Activated B cell treated with CpG ODN at 0.5 μM for 24 hours (primary cell): ENCODE measurements at regions of chr11 and their contacts with region 1.

Region 1: DNA sequence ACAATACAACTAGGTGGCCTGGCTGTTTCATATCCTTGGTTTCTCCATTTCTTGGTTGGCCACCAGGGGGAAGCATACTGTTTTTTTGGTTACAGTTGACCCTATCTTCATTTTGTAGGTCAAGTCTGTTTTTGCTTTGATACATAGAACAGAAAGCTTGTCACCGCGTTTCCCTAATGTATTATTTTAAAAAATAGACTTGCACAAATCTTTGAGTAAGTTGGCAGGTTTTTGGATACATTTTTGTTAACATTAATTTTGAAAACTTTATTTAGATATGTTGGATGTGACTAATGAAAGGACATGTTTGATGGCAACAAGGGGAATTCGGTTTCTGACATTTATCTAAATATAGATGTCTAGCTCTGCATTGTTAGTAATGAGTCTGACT is 3.0 kb downstream of the NCR3LG1 start:
- DNase-seq: no peak
- ATAC-seq: no peak
- H3K4me3 Mint-ChIP-seq: peak overlapping the region; percentile 87
- H3K27ac Mint-ChIP-seq: no peak overlapping the region
- H3K4me1 Mint-ChIP-seq: peaks cover 32% of the 10 kb centered on the region
- H3K27me3 Mint-ChIP-seq: peaks cover 32% of the 10 kb centered on the region
- CTCF ChIP-seq: peak; percentile 45

Region 2: DNA sequence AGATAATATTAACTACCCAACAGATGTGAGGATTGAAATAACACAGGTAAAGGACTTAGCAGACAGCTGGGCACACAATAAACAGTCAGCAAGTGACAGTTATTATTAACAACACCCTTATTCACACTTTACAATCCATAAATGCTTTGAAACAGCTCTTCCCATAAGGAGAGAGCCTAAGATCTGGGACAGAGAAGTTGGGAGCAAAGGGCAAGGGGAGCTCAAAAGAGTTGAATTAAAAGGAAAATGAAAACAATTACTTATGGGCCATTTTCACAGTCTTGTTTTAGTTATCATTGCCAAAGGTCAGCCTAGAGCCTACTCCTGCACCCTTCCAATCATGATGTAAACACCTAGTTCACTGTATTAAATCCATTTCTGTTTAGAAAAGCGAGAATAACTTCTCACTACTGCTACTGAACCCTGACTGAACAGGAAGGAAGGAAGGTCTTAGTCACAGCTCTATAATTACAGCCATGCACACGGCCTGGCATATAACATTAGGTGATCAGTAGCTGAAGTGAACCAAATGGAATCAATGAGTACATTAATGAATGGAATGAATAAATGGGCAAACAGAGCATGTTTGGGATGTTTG is 451.7 kb before region 1 on chr11:
- CTCF ChIA-PET with region 1: no interaction called
- POLR2A ChIA-PET with region 1: no interaction called
- intact Hi-C with region 1: loop called (anchors 10 kb)
- DNase-seq: no peak
- ATAC-seq: peak; percentile 64
- H3K4me3 Mint-ChIP-seq: peak overlapping the region; percentile 74
- H3K27ac Mint-ChIP-seq: peak overlapping the region; percentile 92
- H3K4me1 Mint-ChIP-seq: peaks cover 33% of the 10 kb centered on the region
- H3K27me3 Mint-ChIP-seq: no peaks in the 10 kb centered on the region
- CTCF ChIP-seq: no peak

Region 3: GRCh38 chr11:17207317-17208258 is 147.0 kb before region 1 on chr11 and contains the start of gene PIK3C2A:
- CTCF ChIA-PET with region 1: no interaction called
- POLR2A ChIA-PET with region 1: interaction called, 4 read pairs
- intact Hi-C with region 1: loop called (anchors 10 kb)
- DNase-seq: peak; percentile 91
- ATAC-seq: peak; percentile 95
- H3K4me3 Mint-ChIP-seq: peak within 1 kb of the TSS; percentile 99
- H3K27ac Mint-ChIP-seq: peak within 1 kb of the TSS; percentile 99
- H3K4me1 Mint-ChIP-seq: peaks cover 40% of the 10 kb centered on the region
- H3K27me3 Mint-ChIP-seq: no peaks in the 10 kb centered on the region
- CTCF ChIP-seq: no peak
- total RNA-seq, gene PIK3C2A: 35.9 and 41.2 TPM in 2 replicates

Region 4: DNA sequence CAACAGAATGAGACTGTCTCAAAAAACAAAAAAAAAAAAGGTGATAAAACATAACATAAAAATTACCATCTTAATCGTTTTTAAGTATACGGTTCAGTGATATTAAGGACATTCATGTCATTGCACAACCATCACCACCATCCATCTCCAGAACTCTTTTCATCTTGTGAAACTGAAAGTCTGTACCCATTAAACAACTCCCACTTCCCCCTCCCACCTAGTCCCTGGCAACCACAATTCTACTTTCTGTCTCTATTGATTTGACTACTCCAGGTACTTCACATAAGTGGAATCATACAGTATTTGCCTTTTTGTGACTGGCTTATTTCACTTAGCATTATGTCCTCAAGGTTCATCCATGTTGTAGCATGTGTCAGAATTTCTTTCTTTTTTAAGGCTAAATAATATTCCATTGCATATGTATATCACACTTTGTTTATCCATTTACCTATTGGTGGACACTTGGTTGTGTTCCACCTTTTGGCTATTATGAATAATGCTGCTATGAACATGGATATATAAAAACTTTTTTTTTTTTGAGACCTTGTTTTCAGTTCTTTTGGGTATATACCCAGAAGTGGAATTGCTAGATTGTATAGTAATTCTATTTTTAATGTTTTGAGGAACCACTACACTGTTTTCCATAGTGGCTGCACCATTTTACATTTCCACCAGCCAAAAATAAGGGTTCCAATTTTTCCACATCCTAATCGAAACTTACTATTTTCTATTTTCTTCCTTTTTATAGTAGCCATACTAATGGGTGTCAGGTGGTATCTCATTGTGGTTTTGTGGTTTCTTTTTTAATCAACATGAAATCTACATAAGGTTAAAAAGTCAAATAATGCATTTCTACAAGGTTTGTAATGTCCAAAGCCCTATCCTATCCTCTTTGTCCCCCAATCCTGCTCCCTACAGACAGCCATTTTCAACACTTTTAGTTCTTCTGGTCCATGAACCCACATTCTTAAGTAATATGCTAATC is 123.4 kb before region 1 on chr11:
- CTCF ChIA-PET with region 1: interaction called, 8 read pairs
- POLR2A ChIA-PET with region 1: no interaction called
- intact Hi-C with region 1: loop called (anchors 10 kb)
- DNase-seq: no peak
- ATAC-seq: peak; percentile 78
- H3K4me3 Mint-ChIP-seq: peak overlapping the region; percentile 29
- H3K27ac Mint-ChIP-seq: peak overlapping the region; percentile 11
- H3K4me1 Mint-ChIP-seq: peaks cover 16% of the 10 kb centered on the region
- H3K27me3 Mint-ChIP-seq: no peaks in the 10 kb centered on the region
- CTCF ChIP-seq: no peak

Region 5: GRCh38 chr11:17276236-17277023 is 78.2 kb before region 1 on chr11 and contains the start of gene NUCB2:
- CTCF ChIA-PET with region 1: no interaction called
- POLR2A ChIA-PET with region 1: no interaction called
- intact Hi-C with region 1: loop called (anchors 1 kb)
- DNase-seq: peak; percentile 95
- ATAC-seq: peak; percentile 97
- H3K4me3 Mint-ChIP-seq: peak within 1 kb of the TSS; percentile 96
- H3K27ac Mint-ChIP-seq: peak within 1 kb of the TSS; percentile 85
- H3K4me1 Mint-ChIP-seq: peaks cover 20% of the 10 kb centered on the region
- H3K27me3 Mint-ChIP-seq: peaks cover 2% of the 10 kb centered on the region
- CTCF ChIP-seq: no peak
- total RNA-seq, gene NUCB2: 6.2 and 6.8 TPM in 2 replicates

Region 6: GRCh38 chr11:17389211-17389956 is 34.8 kb after region 1 on chr11:
- CTCF ChIA-PET with region 1: interaction called, 10 read pairs
- POLR2A ChIA-PET with region 1: interaction called, 3 read pairs
- intact Hi-C with region 1: loop called (anchors 1 kb)
- DNase-seq: peak; percentile 85
- ATAC-seq: peak; percentile 90
- H3K4me3 Mint-ChIP-seq: peak overlapping the region; percentile 84
- H3K27ac Mint-ChIP-seq: peak overlapping the region; percentile 59
- H3K4me1 Mint-ChIP-seq: peaks cover 18% of the 10 kb centered on the region
- H3K27me3 Mint-ChIP-seq: no peaks in the 10 kb centered on the region
- CTCF ChIP-seq: no peak